Tibial artery (tissue), 4 donors: ENCODE measurements at regions of chr5 and their contacts with region 1.

Region 1: GRCh38 chr5:142881076-142881783 is 111.1 kb downstream of the ARHGAP26 start:
- DNase-seq: peak in 1 of 2 donors; percentile 41
- H3K4me3 ChIP-seq: no peak overlapping the region
- H3K27ac ChIP-seq: peak overlapping the region; percentile 1 to 44
- H3K4me1 ChIP-seq: peaks cover 0 to 46% (median 30%) of the 10 kb centered on the region in 4 donors
- H3K27me3 ChIP-seq: no peaks in the 10 kb centered on the region
- CTCF ChIP-seq: no peak

Region 2: DNA sequence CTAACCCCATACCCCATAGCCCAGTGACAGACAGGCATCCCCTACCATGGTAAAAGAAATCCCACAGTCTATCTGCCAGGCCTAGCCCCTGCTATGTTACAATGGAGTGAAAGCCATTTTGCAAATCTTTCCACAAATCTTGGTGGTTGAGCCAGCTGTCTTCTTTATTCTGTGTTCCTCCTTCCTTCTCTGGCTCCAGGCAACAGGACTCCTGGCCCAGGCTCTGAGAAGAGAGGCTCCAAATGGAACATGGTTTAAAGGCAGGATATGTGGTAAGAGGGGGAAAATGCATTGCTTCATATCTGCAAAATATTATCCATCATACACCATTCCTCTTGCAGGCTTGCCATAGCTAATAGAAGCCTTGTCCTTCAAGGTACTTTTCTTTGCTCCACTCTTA is 220.5 kb before region 1 on chr5:
- intact Hi-C with region 1: loop called (anchors 5 kb)
- DNase-seq: no peak
- H3K4me3 ChIP-seq: no peak overlapping the region
- H3K27ac ChIP-seq: no peak overlapping the region
- H3K4me1 ChIP-seq: peaks cover 0 to 7% (median 3%) of the 10 kb centered on the region in 4 donors
- H3K27me3 ChIP-seq: no peaks in the 10 kb centered on the region
- CTCF ChIP-seq: no peak

Region 3: DNA sequence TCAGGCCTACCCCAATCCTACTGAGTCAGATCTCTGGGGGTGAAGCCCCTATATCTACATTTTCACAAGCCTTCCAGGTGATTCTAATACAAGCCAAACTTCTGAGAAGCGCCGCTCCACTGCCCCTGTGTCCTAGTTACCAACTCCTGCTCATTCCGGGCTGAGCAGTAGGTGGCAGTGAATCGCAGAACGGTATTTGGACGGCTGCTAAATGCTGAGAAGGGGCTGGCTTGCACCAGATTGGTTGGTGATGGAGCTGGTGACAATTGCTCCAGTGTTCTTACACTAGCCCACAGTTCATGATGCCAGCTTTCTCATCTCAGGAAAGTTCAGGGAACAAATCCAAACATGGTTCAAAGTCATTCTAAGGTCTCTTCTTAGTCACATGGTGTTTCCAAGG is 164.3 kb before region 1 on chr5:
- intact Hi-C with region 1: loop called (anchors 2 kb)
- DNase-seq: peak; percentile 41 to 73
- H3K4me3 ChIP-seq: no peak overlapping the region
- H3K27ac ChIP-seq: peak overlapping the region in 1 of 2 donors; percentile 15
- H3K4me1 ChIP-seq: peaks cover 0 to 15% (median 9%) of the 10 kb centered on the region in 4 donors
- H3K27me3 ChIP-seq: no peaks in the 10 kb centered on the region
- CTCF ChIP-seq: peak; percentile 40 to 43

Region 4: DNA sequence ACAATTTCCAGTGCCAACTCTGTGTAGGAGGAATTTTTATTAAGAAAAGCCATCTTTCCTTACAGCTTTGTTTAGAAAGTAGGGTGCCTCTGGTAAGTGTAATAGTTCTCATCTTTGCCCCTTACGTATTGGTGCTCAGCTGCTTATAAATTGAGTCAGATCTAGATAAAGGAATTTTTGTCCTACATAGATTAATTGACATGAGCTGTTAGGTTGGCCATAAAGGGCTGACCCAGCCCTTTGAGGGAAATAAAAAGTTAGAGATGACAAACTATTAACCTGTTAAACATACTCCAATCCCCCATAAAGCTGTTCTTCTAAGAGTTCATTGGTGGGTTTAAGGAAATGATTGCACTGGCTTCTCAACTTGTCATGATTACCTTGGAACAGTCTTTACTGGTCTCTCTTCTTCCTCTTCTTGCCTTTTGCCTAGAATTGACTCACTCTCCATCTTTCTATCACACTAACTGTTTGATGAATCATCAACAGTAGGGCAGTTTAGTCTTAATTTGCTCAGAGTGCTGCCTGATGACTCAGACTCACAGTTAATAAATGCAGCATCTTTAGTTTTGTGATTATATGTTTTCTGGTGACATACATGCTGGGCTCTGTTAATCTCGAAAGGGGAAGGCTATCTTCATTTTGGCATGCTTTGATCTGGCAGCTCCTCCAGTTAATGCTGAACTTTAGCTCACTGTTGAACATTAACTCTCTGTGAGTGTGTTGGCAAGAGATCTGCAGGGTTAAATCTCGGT is 59.3 kb before region 1 on chr5:
- intact Hi-C with region 1: no loop called
- DNase-seq: no peak
- H3K4me3 ChIP-seq: no peak overlapping the region
- H3K27ac ChIP-seq: no peak overlapping the region
- H3K4me1 ChIP-seq: peaks cover 0 to 68% (median 48%) of the 10 kb centered on the region in 4 donors
- H3K27me3 ChIP-seq: no peaks in the 10 kb centered on the region
- CTCF ChIP-seq: no peak

Region 5: DNA sequence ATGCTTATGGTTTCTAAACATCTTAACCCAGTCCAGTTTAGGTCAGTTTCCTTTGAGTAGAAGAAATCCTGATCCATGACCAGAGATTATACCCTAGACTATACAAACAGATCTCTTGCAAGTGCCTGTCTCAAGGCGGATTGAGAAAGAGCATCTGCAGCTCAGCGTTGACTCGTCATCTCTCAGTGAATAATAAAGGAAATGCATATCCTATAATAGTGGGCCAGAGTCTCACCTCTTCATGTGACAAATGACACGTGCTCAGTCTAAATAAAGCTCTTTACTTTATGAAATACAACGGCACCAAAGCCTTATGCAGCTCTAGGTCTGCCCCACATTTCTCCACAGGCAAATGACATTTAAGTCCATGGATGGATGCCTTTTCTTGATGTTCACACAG is 701.6 kb after region 1 on chr5:
- intact Hi-C with region 1: no loop called
- DNase-seq: no peak
- H3K4me3 ChIP-seq: no peak overlapping the region
- H3K27ac ChIP-seq: no peak overlapping the region
- H3K4me1 ChIP-seq: peaks cover 0 to 17% (median 0%) of the 10 kb centered on the region in 4 donors
- H3K27me3 ChIP-seq: no peaks in the 10 kb centered on the region
- CTCF ChIP-seq: no peak